Mammary epithelial cell (primary cell): ENCODE measurements at regions of chr20 and their contacts with region 1.

Region 1: GRCh38 chr20:45890985-45891983 is at the starts of genes CTSA and NEURL2:
- DNase-seq: peak; percentile 80
- H3K4me3 ChIP-seq: peak within 1 kb of the TSS; percentile 75 to 93 (median 89)
- H3K27ac ChIP-seq: peak within 1 kb of the TSS; percentile 22
- H3K4me1 ChIP-seq: peaks cover 30% of the 10 kb centered on the region
- H3K27me3 ChIP-seq: no peaks in the 10 kb centered on the region
- CTCF ChIP-seq: no peak
- total RNA-seq, gene CTSA: 32.5 to 68.8 TPM
- total RNA-seq, gene NEURL2: 2.1 to 3.3 TPM

Region 2: DNA sequence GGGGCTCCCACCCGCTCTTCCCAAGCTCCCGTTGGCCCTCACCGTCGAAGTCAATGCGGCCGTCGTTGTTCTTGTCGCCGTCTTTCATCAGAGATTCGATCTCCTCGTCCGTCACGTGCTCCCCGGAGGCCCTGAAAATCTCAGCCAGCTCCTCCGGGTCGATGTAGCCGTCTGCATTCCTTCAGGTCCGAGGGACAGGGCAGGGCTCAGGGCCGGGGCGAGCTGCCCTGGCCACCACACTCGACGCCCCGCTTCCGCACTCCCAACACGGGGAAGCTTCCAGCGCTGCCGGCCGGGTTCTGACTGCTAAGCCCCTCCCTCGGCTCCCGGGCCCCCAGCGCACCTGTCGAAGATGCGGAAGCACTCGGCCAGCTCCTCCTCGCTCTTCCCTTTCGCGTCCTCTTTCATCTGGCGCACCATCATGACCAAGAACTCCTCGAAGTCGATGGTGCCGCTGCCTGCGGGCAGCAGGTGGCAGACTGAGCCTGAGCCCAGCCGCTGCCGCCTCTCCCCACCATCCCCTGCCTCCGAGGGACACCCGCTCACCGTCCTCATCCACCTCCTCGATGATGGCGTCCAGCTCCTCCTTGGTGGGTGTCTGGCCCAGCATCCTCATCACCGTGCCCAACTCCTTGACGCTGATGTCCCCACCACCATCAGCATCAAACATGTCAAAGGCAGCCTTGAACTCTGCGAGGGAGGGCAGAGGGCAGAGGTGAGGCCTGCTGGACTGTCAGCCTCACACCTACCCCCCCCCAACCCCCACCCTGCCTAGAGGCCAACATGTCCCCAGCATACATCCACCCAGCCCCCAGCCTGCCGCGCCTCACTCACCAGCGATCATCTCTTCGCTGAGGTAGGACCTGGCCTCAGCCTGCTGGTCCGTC is 67.1 kb before region 1 on chr20:
- CTCF ChIA-PET with region 1: no interaction called
- dilution Hi-C with region 1: no loop called
- in situ Hi-C with region 1: no loop called
- intact Hi-C with region 1: loop called (anchors 2 kb)
- DNase-seq: peak; percentile 37
- H3K4me3 ChIP-seq: peak overlapping the region in 1 of 3 experiments; percentile 35
- H3K27ac ChIP-seq: no peak overlapping the region
- H3K4me1 ChIP-seq: peaks cover 12% of the 10 kb centered on the region
- H3K27me3 ChIP-seq: no peaks in the 10 kb centered on the region
- CTCF ChIP-seq: peak; percentile 41 to 61

Region 3: DNA sequence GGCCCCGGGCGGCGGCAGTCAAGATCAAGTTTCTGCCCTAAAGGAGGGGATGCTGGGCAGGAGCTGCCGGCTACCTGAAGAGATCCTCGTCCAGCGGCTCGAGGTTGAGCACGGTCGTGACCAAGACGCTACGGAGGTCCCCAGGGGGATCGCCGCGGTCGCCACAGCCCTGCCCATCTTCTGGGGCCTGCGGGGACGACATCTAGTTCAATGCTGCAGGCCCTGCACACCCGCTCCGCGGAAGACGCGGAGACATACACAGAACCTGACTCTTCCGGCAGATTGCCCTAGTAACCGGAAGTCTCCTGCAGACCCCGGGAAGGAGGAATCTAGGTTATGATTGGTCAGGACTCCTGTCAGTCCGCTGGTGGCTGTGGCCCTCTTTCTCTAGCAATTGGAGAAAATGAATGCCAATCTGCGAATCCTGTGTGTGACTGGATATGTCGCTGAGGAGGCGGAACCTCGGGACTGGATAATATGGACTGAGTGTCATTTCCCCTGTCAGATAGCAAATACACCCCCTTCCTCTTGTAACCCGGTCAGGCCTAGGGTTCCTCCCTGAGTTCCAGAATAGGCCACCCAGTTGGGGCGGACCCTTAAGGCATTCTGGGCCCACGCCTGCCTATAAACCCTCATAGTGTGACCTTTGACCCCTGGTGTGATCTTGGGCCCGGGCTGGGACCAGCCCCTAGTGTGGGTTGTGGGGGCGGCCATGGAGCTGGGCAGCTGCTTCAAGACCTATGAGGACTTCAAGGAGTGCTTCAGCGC is 34.0 kb before region 1 on chr20 and contains the starts of genes ACOT8 and ZSWIM3:
- CTCF ChIA-PET with region 1: no interaction called
- dilution Hi-C with region 1: no loop called
- in situ Hi-C with region 1: no loop called
- intact Hi-C with region 1: loop called (anchors 1 kb)
- DNase-seq: peak; percentile 100
- H3K4me3 ChIP-seq: peak within 1 kb of the TSS; percentile 73 to 76 (median 74)
- H3K27ac ChIP-seq: peak within 1 kb of the TSS; percentile 35
- H3K4me1 ChIP-seq: peaks cover 4% of the 10 kb centered on the region
- H3K27me3 ChIP-seq: no peaks in the 10 kb centered on the region
- CTCF ChIP-seq: no peak
- total RNA-seq, gene ACOT8: 22.3 to 34.0 TPM
- total RNA-seq, gene ZSWIM3: 1.9 to 5.8 TPM

Region 4: DNA sequence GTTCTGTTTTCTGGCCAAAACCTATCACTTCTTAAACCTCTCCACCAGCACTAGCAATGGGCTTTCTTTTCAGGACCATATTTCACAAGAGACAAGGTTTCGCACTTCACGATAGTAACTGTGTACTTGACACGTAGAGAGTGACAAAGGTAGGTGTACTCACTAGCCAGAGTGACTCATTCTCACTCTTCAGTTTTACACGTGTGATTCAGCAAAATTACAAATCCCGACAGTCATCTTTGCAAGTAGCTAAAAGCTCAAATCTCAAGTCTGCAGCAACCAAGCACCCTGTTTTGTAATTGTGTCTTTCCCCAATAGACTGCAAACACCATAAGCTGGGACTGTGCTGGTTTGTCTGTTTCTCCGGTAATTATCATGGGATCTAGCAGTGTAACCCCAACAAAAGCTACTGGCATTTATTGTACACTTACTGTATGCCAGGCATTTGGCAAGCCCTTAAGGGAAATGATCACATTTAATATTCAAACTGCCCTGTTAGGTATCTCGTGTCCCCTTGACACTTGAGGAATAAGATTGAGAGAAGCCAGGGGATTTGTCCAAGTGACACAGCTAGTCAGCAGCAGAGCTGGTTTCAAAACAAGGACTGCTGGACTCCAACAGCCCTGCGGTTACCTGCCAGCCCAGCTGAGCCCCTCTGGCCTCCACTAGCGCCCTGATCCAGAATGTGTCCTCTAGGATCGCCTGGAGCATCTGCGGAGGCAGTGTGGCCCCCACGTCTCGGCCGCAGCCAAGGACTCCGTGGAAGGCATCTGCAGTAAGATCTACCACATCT is 53.1 kb after region 1 on chr20:
- CTCF ChIA-PET with region 1: no interaction called
- dilution Hi-C with region 1: loop called (anchors 5 kb)
- in situ Hi-C with region 1: no loop called
- intact Hi-C with region 1: no loop called
- DNase-seq: peak; percentile 78
- H3K4me3 ChIP-seq: no peak overlapping the region
- H3K27ac ChIP-seq: no peak overlapping the region
- H3K4me1 ChIP-seq: peaks cover 16% of the 10 kb centered on the region
- H3K27me3 ChIP-seq: no peaks in the 10 kb centered on the region
- CTCF ChIP-seq: no peak

Region 5: DNA sequence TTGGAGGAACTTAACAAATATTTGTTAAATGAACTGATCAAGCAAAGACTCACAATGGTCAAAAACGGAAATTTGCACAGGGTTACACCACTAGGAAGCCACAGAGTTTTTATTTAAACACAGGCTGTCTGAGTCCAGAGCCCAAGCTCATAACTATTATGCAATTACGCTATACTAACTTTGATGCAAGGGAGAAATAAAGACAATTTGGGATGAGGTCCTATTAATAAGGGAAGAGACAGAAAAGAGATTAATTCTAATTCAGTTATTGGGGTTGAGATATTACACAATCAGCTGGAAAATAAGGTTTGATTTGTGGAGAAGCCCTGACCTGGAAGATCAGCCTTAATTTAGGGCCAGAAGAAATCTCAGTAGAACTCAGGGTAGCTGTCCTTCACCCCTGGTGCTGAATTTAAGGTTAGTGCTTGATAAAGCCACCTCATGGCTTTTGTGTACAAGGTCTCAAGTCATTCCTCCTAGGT is 632.5 kb after region 1 on chr20:
- CTCF ChIA-PET with region 1: no interaction called
- dilution Hi-C with region 1: no loop called
- in situ Hi-C with region 1: no loop called
- intact Hi-C with region 1: no loop called
- DNase-seq: peak; percentile 2
- H3K4me3 ChIP-seq: no peak overlapping the region
- H3K27ac ChIP-seq: no peak overlapping the region
- H3K4me1 ChIP-seq: no peaks in the 10 kb centered on the region
- H3K27me3 ChIP-seq: peaks cover 1% of the 10 kb centered on the region
- CTCF ChIP-seq: no peak